ENCODE measurements at regions of chr11 and their contacts with region 1.

Region 1: GRCh38 chr11:8813658-8814057 is 97.3 kb upstream of the AKIP1 start:
- DNase-seq: peak; percentile 91
- H3K4me3 ChIP-seq: no peak overlapping the region
- H3K27ac ChIP-seq: peak overlapping the region; percentile 64
- H3K4me1 ChIP-seq: peaks cover 44% of the 10 kb centered on the region
- H3K27me3 ChIP-seq: no peaks in the 10 kb centered on the region
- CTCF ChIP-seq: peak; percentile 94

Region 2: GRCh38 chr11:8225589-8226036 is 588.0 kb before region 1 on chr11:
- CTCF ChIA-PET with region 1: no interaction called
- POLR2A ChIA-PET with region 1: no interaction called
- intact Hi-C with region 1: loop called (anchors 10 kb)
- DNase-seq: peak; percentile 65
- H3K4me3 ChIP-seq: no peak overlapping the region
- H3K27ac ChIP-seq: no peak overlapping the region
- H3K4me1 ChIP-seq: no peaks in the 10 kb centered on the region
- H3K27me3 ChIP-seq: peaks cover 7% of the 10 kb centered on the region
- CTCF ChIP-seq: peak; percentile 87

Region 3: GRCh38 chr11:8577791-8578581 is 235.7 kb before region 1 on chr11:
- CTCF ChIA-PET with region 1: no interaction called
- POLR2A ChIA-PET with region 1: no interaction called
- intact Hi-C with region 1: loop called (anchors 10 kb)
- DNase-seq: no peak
- H3K4me3 ChIP-seq: no peak overlapping the region
- H3K27ac ChIP-seq: no peak overlapping the region
- H3K4me1 ChIP-seq: no peaks in the 10 kb centered on the region
- H3K27me3 ChIP-seq: no peaks in the 10 kb centered on the region
- CTCF ChIP-seq: no peak

Region 4: GRCh38 chr11:8671193-8671612 is 142.5 kb before region 1 on chr11:
- CTCF ChIA-PET with region 1: no interaction called
- POLR2A ChIA-PET with region 1: no interaction called
- intact Hi-C with region 1: loop called (anchors 5 kb)
- DNase-seq: peak; percentile 97
- H3K4me3 ChIP-seq: peak overlapping the region; percentile 23
- H3K27ac ChIP-seq: peak overlapping the region; percentile 88
- H3K4me1 ChIP-seq: peaks cover 32% of the 10 kb centered on the region
- H3K27me3 ChIP-seq: no peaks in the 10 kb centered on the region
- CTCF ChIP-seq: no peak

Region 5: GRCh38 chr11:8688414-8689362 is 125.0 kb before region 1 on chr11:
- CTCF ChIA-PET with region 1: no interaction called
- POLR2A ChIA-PET with region 1: no interaction called
- intact Hi-C with region 1: loop called (anchors 2 kb)
- DNase-seq: peak; percentile 96
- H3K4me3 ChIP-seq: peak overlapping the region; percentile 57
- H3K27ac ChIP-seq: peak overlapping the region; percentile 55
- H3K4me1 ChIP-seq: peaks cover 29% of the 10 kb centered on the region
- H3K27me3 ChIP-seq: no peaks in the 10 kb centered on the region
- CTCF ChIP-seq: no peak

Region 6: GRCh38 chr11:8911029-8911826 is 97.6 kb after region 1 on chr11 and contains the start of gene AKIP1:
- CTCF ChIA-PET with region 1: no interaction called
- POLR2A ChIA-PET with region 1: no interaction called
- intact Hi-C with region 1: loop called (anchors 5 kb)
- DNase-seq: peak; percentile 99
- H3K4me3 ChIP-seq: peak within 1 kb of the TSS; percentile 97
- H3K27ac ChIP-seq: peak within 1 kb of the TSS; percentile 95
- H3K4me1 ChIP-seq: peaks cover 15% of the 10 kb centered on the region
- H3K27me3 ChIP-seq: no peaks in the 10 kb centered on the region
- CTCF ChIP-seq: no peak
- total RNA-seq, gene AKIP1: 26.7 and 28.9 TPM in 2 replicates